Activated CD4-positive, alpha-beta T cell treated with anti-CD3 and anti-CD28 coated beads for 36 hours (primary cell): ENCODE measurements at regions of chr1 and their contacts with region 1.

Region 1: GRCh38 chr1:152170287-152170905 is 11.4 kb upstream of the RPTN start:
- DNase-seq: no peak
- ATAC-seq: no peak
- H3K4me3 Mint-ChIP-seq: no peak overlapping the region
- H3K27ac Mint-ChIP-seq: no peak overlapping the region
- H3K4me1 Mint-ChIP-seq: peaks cover 7% of the 10 kb centered on the region
- H3K27me3 Mint-ChIP-seq: peaks cover 4% of the 10 kb centered on the region

Region 2: DNA sequence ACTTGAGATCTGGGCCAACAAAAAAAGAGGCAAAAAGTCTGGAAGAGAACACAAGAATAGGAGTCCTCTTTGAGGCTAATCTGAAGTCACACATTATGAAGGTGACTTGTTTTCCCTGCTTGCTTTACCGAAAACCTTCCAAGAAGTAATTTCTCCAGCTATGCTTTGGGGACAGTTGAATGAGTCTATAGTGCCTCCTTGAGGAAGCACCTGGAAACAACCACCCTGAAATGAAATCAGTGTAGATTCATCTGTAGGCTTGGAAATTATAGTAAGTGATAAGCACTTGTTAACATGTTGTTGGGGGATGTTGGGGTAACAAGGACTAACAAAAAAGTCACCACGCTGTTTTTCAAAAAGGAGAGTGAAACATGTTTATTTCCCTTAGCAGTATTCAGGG is 12.0 kb after region 1 on chr1:
- CTCF ChIA-PET with region 1: interaction called, 71 read pairs
- POLR2A ChIA-PET with region 1: interaction called, 7 read pairs
- intact Hi-C with region 1: loop called in 1 of 2 experiments (anchors 1 kb)
- DNase-seq: peak; percentile 11
- ATAC-seq: peak; percentile 53
- H3K4me3 Mint-ChIP-seq: no peak overlapping the region
- H3K27ac Mint-ChIP-seq: no peak overlapping the region
- H3K4me1 Mint-ChIP-seq: peaks cover 3% of the 10 kb centered on the region
- H3K27me3 Mint-ChIP-seq: peaks cover 14% of the 10 kb centered on the region